ENCODE measurements at regions of chr2 and their contacts with region 1.

Region 1: DNA sequence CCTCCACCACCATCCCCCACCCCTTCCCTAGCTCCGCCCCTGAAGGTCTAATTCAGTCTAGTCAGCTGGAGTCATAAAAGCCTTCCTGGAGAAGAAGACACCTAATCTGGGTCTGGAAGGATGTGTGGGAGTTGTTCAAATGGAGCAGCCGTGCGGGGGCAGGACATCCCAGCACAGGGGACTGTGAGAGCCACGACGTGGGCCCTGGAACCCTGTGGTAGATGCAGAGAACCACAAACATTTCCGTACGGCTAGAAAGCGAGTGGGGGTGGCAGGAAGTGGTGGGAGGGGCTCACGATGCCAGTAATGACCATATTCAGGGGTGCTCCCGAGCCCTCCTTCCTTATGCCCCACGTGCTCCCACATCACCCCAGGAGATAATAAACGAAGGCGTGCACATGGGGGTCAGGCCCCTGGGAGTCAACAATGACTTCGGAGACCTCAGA is 20.9 kb upstream of the COL6A3 start:
- DNase-seq: no peak

Region 2: GRCh38 chr2:237421542-237422116 is 13.3 kb before region 1 on chr2:
- CTCF ChIA-PET with region 1: interaction called, 13 read pairs
- POLR2A ChIA-PET with region 1: interaction called, 4 read pairs
- DNase-seq: peak; percentile 77

Measured in HEK293T (cell line).